GM18951 (cell line): ENCODE measurements at regions of chr1 and their contacts with region 1.

Region 1: DNA sequence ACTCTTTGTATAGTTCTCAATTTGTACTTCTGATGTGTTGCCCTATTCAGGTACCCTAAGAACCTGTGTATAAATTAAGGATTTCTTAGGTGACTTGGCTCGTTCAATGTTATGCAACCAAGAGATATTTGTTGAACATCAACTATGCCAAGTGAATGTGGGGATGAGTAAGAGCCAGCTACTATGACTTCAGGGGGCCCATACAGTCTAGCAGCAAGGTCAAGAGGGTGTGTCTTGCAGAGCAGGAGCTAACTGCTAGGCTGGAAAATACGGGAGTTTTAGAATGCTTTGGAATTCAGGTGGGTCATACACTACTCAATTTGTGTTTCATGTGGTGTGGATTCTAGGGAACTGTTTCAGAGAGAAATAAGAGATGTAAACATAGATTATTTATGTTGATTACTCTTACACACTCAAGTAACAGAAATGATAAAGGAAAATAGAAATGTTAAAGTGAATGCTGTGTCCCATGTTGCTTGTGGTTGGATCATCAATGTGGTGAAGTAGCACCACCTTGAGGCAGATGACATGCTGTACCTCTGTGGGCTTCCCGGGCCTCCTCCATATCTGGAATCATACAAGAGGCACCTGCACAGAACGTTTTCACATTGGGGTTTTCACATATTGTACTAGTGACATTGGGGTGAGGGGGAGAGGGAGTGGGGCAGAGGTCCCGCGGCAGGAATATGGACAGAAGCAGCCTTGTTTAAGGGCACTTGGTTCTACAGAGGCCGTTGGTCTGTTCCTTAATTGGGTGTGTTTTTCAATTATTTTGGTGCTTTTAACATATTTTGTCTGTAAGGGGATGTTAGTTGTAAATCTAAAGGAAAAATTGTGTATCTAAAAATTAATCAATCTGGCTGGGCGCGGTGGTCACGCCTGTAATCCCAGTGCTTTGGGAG is 12.4 kb downstream of the ARPC5 start:
- POLR2A ChIP-seq: no peak

Region 2: GRCh38 chr1:183461350-183461749 is 161.8 kb before region 1 on chr1:
- in situ Hi-C with region 1: loop called (anchors 10 kb)
- POLR2A ChIP-seq: no peak

Region 3: DNA sequence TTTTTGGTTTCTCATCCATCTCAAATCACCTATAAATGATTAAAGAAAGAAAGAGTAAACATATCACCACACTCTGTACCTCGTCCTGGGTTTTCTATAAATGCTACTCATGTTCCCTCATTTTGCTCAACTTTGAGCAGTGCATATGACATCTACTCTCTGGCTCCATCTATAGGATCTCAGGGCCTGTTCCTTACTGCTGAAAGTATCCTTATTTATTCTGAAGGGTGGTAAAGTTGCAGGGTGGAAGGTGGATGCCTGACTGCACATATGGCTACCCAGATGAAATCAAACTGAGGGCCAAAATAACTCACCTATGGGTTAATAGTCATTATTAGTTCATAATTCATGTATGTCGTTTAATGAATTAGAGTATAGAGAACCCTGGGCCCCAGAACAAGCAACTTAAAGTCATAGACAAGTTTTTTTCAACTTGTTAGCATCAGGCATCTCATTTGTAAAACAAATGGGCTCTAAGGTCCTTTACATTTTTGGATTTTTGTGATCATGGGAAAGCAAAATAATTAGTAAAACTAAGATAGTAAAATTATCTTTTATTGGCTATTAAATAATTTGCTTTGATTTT is 79.4 kb before region 1 on chr1:
- in situ Hi-C with region 1: loop called (anchors 10 kb)
- POLR2A ChIP-seq: no peak